ENCODE measurements at regions of chr6 and their contacts with region 1.

Region 1: DNA sequence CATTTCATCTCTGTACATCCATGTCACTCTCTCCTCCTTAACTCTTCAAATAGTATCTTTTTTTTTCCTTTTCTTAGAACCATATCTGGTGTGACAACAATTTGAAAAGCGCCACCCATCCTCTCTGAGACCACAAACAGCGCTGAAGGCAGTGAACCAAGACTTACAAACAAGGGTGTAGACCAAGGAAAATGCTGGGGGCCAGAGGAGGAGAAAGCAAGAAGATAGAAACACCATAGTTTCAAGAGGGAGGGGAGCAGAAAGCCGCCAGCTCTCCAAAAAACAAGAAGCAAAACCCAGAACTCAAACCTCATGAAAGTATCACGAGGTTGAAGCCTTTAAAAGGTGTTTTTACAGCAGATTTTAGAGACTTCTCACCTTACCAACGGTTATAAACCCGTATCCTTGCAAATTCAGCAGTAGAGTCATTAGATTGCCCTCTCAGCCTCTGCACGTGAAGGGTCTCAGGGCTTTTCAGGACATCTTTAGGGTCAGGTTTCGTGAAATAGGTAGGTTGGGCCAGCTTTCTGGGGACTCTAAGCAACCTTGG is 13.3 kb upstream of the RIPOR2 start:
- DNase-seq: peak; percentile 96
- ATAC-seq: peak; percentile 96
- H3K4me3 ChIP-seq: peak overlapping the region; percentile 28; the same call in 1 of the 2 replicates
- H3K27ac ChIP-seq: peak overlapping the region; percentile 84
- H3K4me1 ChIP-seq: peaks cover 46% of the 10 kb centered on the region
- H3K27me3 ChIP-seq: no peaks in the 10 kb centered on the region
- CTCF ChIP-seq: no peak
- EP300 ChIP-seq: peak; percentile 78 to 85; a peak in 2 of 4 replicates
- POLR2A ChIP-seq: no peak
- RAD21 ChIP-seq: peak; percentile 9; the same call in 1 of the 2 replicates

Region 2: DNA sequence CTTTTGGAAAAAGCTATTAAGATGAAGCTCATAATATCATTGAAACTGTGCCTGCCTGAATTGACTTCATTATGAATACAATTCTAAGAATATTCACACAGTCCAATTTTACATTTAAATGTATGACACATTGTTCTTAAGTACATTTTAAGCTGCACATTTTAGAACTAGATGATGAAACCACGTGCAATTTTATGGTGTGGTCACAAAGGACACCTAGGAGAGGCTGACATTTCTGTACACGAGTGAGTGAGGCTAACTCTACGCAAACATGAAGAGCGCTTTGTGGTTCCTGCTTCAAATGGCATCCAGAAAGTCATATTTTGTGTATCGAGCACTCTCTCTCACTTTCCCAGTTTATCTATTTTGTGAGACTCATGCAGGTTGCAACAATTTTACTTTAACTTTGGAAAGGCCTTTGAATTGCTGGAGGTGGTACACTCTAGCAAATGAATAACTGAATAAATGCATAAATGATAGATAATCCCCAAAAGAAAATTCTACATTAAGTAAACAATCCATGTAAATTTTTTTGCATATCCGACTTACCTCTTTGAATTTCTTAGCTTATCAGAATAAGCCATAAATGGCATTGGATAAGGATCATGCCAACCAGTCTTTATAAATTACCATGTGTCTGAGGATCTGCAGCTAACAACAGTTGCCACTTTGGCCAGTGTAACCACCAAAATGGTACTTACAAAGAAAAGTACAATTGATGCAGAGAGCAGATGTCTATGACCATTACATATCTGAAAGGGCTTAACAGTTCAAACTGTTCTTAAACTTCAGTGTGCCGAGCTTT is 725.8 kb before region 1 on chr6:
- CTCF ChIA-PET with region 1: no interaction called
- POLR2A ChIA-PET with region 1: no interaction called
- RAD21 ChIA-PET with region 1: no interaction called
- SMC1A ChIA-PET with region 1: no interaction called
- in situ Hi-C with region 1: no loop called
- intact Hi-C with region 1: no loop called
- DNase-seq: no peak
- ATAC-seq: no peak
- H3K4me3 ChIP-seq: no peak overlapping the region
- H3K27ac ChIP-seq: no peak overlapping the region
- H3K4me1 ChIP-seq: no peaks in the 10 kb centered on the region
- H3K27me3 ChIP-seq: peaks cover 0 to 5% of the 10 kb centered on the region in 2 experiments; a peak in 2 of 4 replicates
- CTCF ChIP-seq: no peak
- EP300 ChIP-seq: no peak
- POLR2A ChIP-seq: no peak
- RAD21 ChIP-seq: no peak

Region 3: DNA sequence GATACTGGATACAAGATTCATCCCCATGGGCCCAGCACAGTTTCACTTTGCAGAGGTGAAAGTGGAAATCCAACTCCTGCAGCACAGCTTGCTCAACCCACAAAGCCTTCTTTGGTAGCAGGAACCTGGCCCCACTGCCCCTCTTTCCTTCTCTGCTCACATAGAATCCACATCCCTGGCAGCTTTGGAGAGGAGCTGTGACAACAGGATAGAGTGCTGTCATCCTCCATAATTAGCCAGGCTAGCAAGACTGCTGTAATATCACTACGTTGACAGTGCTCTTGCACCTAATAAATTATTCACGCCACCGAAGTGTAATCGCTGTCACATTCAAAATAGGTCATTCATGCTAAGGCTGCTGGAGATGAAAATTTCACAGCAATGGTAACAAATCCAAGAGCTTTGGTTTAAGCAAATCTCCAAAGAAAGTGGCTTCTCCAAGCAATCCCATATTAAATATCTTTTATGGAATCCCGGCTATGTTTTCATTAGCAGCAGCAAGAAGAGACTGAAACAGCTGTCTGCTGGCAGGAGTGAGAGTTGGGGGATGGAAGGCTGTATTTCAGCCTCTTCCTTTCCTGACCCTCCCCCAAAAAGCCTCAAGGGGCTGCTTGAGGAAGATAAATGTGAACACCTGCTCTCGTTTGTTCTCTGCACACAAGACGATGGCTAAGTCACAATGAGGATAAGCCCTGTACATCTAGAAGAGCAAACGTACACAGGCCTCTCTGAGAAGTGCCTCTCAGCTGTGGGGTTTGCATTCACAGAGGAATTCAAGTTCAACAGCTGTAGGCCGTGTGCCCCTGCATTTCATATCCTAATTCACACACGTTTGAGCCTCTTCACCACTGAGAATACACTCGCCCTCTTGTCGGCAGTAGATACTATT is 29.8 kb before region 1 on chr6:
- CTCF ChIA-PET with region 1: interaction called, 3 read pairs
- POLR2A ChIA-PET with region 1: no interaction called
- RAD21 ChIA-PET with region 1: interaction called, 3 read pairs
- SMC1A ChIA-PET with region 1: interaction called, 10 read pairs
- in situ Hi-C with region 1: no loop called
- intact Hi-C with region 1: no loop called
- DNase-seq: no peak
- ATAC-seq: peak; percentile 75
- H3K4me3 ChIP-seq: peak overlapping the region; percentile 13; the same call in 1 of the 2 replicates
- H3K27ac ChIP-seq: peak overlapping the region; percentile 1
- H3K4me1 ChIP-seq: peaks cover 28% of the 10 kb centered on the region
- H3K27me3 ChIP-seq: no peaks in the 10 kb centered on the region
- CTCF ChIP-seq: no peak
- EP300 ChIP-seq: no peak
- POLR2A ChIP-seq: no peak
- RAD21 ChIP-seq: no peak

Region 4: DNA sequence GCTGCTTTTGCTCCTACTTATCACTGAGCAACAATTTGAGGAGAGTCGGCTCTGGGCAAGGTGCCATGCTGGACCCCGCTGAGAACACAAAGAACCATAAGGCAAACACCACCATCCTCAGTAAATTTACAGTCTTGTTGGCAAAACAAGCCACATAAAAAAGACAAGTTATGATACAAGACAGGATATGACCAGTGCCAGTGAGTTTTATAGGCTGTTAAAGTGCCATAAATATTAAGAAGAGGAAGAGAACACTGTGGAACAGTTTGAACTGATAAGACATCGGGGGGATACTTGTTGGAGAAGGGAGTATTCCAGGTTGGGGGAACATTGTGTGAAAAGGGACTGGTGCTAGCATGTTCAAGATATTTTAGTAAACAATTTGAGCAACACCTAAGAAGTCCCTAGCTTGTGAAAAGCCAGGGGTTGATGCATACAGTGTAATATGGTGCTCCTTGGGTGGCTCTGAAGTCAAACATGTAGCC is 11.9 kb after region 1 on chr6:
- CTCF ChIA-PET with region 1: interaction called, 5 read pairs
- POLR2A ChIA-PET with region 1: interaction called, 5 read pairs
- RAD21 ChIA-PET with region 1: interaction called, 7 read pairs
- SMC1A ChIA-PET with region 1: interaction called, 17 read pairs
- in situ Hi-C with region 1: no loop called
- intact Hi-C with region 1: no loop called
- DNase-seq: no peak
- ATAC-seq: no peak
- H3K4me3 ChIP-seq: no peak overlapping the region
- H3K27ac ChIP-seq: no peak overlapping the region
- H3K4me1 ChIP-seq: peaks cover 8% of the 10 kb centered on the region
- H3K27me3 ChIP-seq: no peaks in the 10 kb centered on the region
- CTCF ChIP-seq: no peak
- EP300 ChIP-seq: no peak
- POLR2A ChIP-seq: no peak
- RAD21 ChIP-seq: no peak

Region 5: DNA sequence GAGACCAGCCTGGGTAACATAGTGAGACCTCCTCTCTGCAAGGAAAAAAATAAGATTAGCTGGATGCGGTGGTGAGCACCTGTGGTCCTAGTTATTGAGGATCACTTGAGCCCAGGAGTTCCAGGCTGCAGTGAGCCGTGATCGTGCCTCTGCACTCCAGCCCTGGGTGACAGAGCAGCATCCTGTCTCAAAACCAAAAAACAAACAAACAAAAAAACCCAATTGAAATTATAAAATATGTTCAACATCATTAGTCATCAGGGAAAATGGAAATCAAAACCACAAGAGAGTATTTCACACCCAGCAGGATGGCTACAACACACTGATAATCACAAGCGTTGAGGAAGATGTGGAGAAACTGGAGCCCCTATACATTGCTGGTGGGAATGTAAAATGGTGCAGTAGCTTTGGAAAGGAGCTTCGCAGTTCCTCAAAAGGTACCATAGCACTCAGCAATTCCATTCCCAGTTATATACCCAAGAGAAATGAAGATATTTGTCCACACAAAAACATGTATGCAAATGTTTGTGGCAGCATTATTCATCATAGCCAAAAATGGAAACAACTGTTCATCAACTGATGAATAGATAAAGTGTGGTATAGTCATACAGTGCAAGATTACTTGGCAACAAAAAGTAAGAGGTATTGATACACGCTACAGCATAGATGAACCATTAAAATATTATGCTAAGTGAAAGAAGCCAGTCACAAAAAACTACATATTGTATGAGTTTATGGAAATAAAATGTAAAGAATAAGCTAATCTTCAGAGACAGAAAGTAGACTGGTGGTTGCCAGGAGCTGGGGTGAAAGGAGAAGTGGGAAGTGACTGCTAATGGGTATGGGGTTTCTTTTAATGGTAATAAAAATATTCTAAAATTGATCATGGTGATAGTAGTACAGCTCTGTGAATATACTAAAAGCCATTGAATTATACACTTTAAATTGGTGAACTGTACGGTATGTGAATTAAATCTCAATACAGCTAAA is 25.4 kb after region 1 on chr6:
- CTCF ChIA-PET with region 1: no interaction called
- POLR2A ChIA-PET with region 1: interaction called, 3 read pairs
- RAD21 ChIA-PET with region 1: interaction called, 8 read pairs
- SMC1A ChIA-PET with region 1: interaction called, 6 read pairs
- in situ Hi-C with region 1: no loop called
- intact Hi-C with region 1: loop called (anchors 1 kb)
- DNase-seq: no peak
- ATAC-seq: peak; percentile 95
- H3K4me3 ChIP-seq: no peak overlapping the region
- H3K27ac ChIP-seq: no peak overlapping the region
- H3K4me1 ChIP-seq: peaks cover 10% of the 10 kb centered on the region
- H3K27me3 ChIP-seq: no peaks in the 10 kb centered on the region
- CTCF ChIP-seq: no peak
- EP300 ChIP-seq: no peak; a peak in 1 of 4 replicates
- POLR2A ChIP-seq: no peak
- RAD21 ChIP-seq: no peak

Measured in GM12878 (cell line).